ENCODE measurements at regions of chr3 and their contacts with region 1.

Region 1: DNA sequence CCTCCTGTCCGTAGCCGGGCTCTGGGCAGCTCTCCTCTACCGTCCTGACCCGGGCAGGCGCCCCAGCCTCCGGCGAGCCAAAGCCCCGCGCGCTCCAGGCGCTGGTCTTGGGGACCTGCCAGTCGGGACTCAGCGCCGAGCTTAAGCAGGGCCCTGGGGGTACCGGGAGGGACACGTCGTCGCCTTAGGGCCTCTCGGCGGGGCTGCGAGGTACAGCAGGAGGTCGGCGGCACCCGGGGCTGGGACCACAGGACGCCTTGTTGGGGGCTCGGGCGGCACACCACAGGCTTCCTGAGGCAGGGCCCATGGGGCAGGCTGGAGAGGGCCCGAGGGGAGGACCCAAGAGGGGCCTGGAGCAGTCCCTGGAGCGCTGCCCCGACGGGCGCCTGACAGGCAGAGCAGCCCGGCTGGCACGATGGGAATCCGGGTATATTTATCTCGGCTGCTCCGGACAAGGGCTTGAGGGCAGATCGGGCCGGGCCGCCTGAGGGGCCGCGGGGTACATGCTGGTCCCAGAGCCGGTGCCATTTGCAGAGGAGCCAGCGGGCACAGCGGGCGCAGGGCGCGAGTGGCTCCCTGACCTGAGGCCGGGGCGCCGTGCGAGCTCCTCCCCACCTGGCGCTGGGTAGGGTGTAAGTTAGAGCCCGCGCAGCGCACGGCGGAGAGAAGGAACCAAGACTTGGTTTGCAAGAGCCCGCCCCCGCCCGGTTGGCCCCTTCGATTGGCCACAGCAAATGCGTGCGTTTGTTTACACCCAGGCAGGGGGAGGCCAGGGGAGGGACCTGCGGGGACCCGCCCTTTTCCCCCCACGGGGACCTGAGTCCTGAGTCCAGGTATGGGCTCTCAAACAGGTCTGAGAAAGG is 574 bp downstream of the SLC38A3 start:
- DNase-seq: peak; percentile 73
- ATAC-seq: peak; percentile 20
- H3K4me3 ChIP-seq: peak overlapping the region; percentile 79 to 93 (median 85)
- H3K27ac ChIP-seq: peak overlapping the region; percentile 99
- H3K4me1 ChIP-seq: peaks cover 87% of the 10 kb centered on the region
- H3K27me3 ChIP-seq: no peaks in the 10 kb centered on the region
- CTCF ChIP-seq: 0 out of 2 replicates have a peak, but pooled peaks have one; percentile 3
- EP300 ChIP-seq: 0 out of 4 replicates have a peak, but pooled peaks of 1 of the 2 experiments have one; percentile 24
- POLR2A ChIP-seq: peak in 1 of 2 experiments; percentile 62; a peak in 2 of 4 replicates
- RAD21 ChIP-seq: 0 out of 2 replicates have a peak, but pooled peaks have one; percentile 43

Region 2: DNA sequence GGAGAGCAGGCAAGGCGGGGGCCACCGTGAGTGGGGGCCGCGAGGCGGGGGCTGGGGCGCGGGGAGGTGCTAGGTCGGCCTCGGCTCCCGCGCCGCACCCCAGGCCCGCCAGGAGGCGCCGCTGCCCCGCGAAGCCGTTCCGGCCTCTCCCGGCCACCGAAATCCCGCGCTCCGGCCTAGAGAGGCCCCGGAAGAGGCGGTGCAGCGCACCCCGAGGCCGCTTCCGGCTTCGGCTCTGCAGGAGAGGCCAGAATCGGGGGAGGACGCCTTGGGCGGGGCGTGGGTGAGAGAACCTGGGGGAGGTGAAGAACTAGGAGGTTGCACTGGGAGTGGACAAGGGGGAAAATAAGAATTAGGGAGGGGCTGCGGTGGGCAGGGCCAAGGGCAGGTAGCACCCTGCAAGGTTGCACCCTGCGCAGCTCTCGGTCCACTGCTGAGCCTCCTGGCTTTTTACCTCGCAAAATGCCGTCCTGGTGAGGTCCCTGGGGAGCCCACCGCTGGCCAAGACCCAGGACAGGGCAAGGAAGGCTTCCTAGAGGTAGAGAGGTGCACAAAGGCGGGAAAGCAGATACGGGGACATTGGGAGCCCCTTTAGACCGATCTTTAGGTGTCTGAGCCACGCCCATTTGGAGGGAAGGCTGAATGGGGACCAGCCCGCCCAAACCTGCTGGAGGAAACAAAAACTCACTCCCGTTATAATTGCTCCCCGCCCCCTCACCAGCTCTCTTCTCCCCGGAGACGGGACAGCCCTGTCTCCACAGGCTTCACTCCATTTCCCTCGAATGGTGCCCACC is 21.9 kb after region 1 on chr3:
- CTCF ChIA-PET with region 1: interaction called, 5 read pairs
- POLR2A ChIA-PET with region 1: interaction called, 625 read pairs
- in situ Hi-C with region 1: no loop called
- intact Hi-C with region 1: no loop called
- DNase-seq: peak; percentile 82
- ATAC-seq: peak; percentile 78
- H3K4me3 ChIP-seq: peak overlapping the region; percentile 75 to 88 (median 84)
- H3K27ac ChIP-seq: peak overlapping the region; percentile 70
- H3K4me1 ChIP-seq: peaks cover 73% of the 10 kb centered on the region
- H3K27me3 ChIP-seq: no peaks in the 10 kb centered on the region
- CTCF ChIP-seq: peak; percentile 89
- EP300 ChIP-seq: peak; percentile 20 to 47; a peak in 2 of 4 replicates
- POLR2A ChIP-seq: no peak
- RAD21 ChIP-seq: peak; percentile 99

Region 3: GRCh38 chr3:50235716-50236496 is 30.3 kb after region 1 on chr3 and contains the start of gene GNAI2:
- CTCF ChIA-PET with region 1: no interaction called
- POLR2A ChIA-PET with region 1: interaction called, 69 read pairs
- in situ Hi-C with region 1: no loop called
- intact Hi-C with region 1: no loop called
- DNase-seq: peak; percentile 94
- ATAC-seq: peak; percentile 93
- H3K4me3 ChIP-seq: peak within 1 kb of the TSS; percentile 85 to 93 (median 87)
- H3K27ac ChIP-seq: peak within 1 kb of the TSS; percentile 61
- H3K4me1 ChIP-seq: peaks cover 59% of the 10 kb centered on the region
- H3K27me3 ChIP-seq: no peaks in the 10 kb centered on the region; a peak in 1 of 5 replicates
- CTCF ChIP-seq: no peak; the same call in 1 of the 2 replicates
- EP300 ChIP-seq: no peak
- POLR2A ChIP-seq: peak; percentile 66 to 92
- RAD21 ChIP-seq: peak; percentile 51
- total RNA-seq, gene GNAI2: 34.5 and 51.1 TPM in 2 replicates

Region 4: DNA sequence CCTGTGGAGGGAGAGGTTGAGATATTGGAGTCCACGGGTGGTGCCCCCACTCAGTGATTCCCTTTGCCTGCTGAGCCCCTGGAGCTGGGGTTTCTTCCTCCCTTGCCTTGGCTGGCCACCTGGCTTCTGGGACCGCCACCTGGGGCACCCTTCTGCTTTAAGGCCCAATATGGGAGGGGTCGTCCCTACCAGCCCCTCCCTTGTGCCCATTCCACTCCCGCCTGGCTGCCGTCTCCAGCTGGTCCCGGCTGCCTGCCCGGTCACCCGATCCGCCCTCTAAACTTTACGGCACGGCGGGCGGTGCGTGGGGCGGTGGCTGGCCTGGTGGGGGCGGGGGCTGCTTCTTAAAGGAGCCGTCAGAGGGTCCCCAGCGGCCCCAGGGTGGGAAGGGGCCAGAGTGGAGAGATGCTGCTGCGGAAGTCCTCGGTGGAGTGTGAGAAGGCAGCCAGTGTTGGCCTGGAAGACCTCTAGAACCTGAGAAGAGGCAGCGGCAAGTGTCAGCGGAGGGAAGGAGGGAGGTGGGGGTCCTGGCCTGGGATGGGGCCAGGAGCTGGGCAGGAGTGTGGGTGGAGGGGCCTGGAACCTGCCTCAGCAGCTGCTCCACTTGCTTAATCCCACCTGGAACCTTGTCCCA is 61.8 kb after region 1 on chr3:
- CTCF ChIA-PET with region 1: no interaction called
- POLR2A ChIA-PET with region 1: interaction called, 82 read pairs
- in situ Hi-C with region 1: no loop called
- intact Hi-C with region 1: no loop called
- DNase-seq: no peak
- ATAC-seq: no peak
- H3K4me3 ChIP-seq: peak overlapping the region; percentile 9 to 83 (median 44); a peak in 5 of 6 replicates
- H3K27ac ChIP-seq: peak overlapping the region; percentile 88
- H3K4me1 ChIP-seq: peaks cover 88% of the 10 kb centered on the region
- H3K27me3 ChIP-seq: no peaks in the 10 kb centered on the region; a peak in 1 of 5 replicates
- CTCF ChIP-seq: no peak
- EP300 ChIP-seq: no peak
- POLR2A ChIP-seq: no peak
- RAD21 ChIP-seq: no peak

Region 5: GRCh38 chr3:50272911-50273693 is 67.5 kb after region 1 on chr3:
- CTCF ChIA-PET with region 1: no interaction called
- POLR2A ChIA-PET with region 1: interaction called, 22 read pairs
- in situ Hi-C with region 1: no loop called
- intact Hi-C with region 1: no loop called
- DNase-seq: peak; percentile 64
- ATAC-seq: peak; percentile 13
- H3K4me3 ChIP-seq: no peak overlapping the region
- H3K27ac ChIP-seq: peak overlapping the region; percentile 88
- H3K4me1 ChIP-seq: peaks cover 54% of the 10 kb centered on the region
- H3K27me3 ChIP-seq: no peaks in the 10 kb centered on the region; a peak in 1 of 5 replicates
- CTCF ChIP-seq: peak; percentile 99
- EP300 ChIP-seq: 0 out of 4 replicates have a peak, but pooled peaks of 1 of the 2 experiments have one; percentile 26
- POLR2A ChIP-seq: no peak
- RAD21 ChIP-seq: peak; percentile 99

Region 6: GRCh38 chr3:50292159-50293078 is 86.8 kb after region 1 on chr3 and contains the start of gene IFRD2:
- CTCF ChIA-PET with region 1: no interaction called
- POLR2A ChIA-PET with region 1: interaction called, 15 read pairs
- in situ Hi-C with region 1: no loop called
- intact Hi-C with region 1: no loop called
- DNase-seq: peak; percentile 95
- ATAC-seq: peak; percentile 91
- H3K4me3 ChIP-seq: peak within 1 kb of the TSS; percentile 60 to 92 (median 85)
- H3K27ac ChIP-seq: peak within 1 kb of the TSS; percentile 73
- H3K4me1 ChIP-seq: peaks cover 33% of the 10 kb centered on the region
- H3K27me3 ChIP-seq: no peaks in the 10 kb centered on the region
- CTCF ChIP-seq: peak; percentile 53
- EP300 ChIP-seq: peak in 1 of 2 experiments; percentile 44; a peak in 2 of 4 replicates
- POLR2A ChIP-seq: peak in 1 of 2 experiments; percentile 73; a peak in 2 of 4 replicates
- RAD21 ChIP-seq: peak; percentile 31; the same call in 1 of the 2 replicates
- total RNA-seq, gene IFRD2: 81.4 and 96.1 TPM in 2 replicates

Region 7: GRCh38 chr3:50436114-50436674 is 230.5 kb after region 1 on chr3:
- CTCF ChIA-PET with region 1: no interaction called
- POLR2A ChIA-PET with region 1: no interaction called
- in situ Hi-C with region 1: no loop called
- intact Hi-C with region 1: no loop called
- DNase-seq: peak; percentile 50
- ATAC-seq: peak; percentile 92
- H3K4me3 ChIP-seq: no peak overlapping the region
- H3K27ac ChIP-seq: no peak overlapping the region
- H3K4me1 ChIP-seq: no peaks in the 10 kb centered on the region
- H3K27me3 ChIP-seq: peaks cover 1 to 25% of the 10 kb centered on the region in 2 experiments; a peak in 4 of 5 replicates
- CTCF ChIP-seq: peak; percentile 97
- EP300 ChIP-seq: no peak
- POLR2A ChIP-seq: no peak
- RAD21 ChIP-seq: peak; percentile 94

Region 8: DNA sequence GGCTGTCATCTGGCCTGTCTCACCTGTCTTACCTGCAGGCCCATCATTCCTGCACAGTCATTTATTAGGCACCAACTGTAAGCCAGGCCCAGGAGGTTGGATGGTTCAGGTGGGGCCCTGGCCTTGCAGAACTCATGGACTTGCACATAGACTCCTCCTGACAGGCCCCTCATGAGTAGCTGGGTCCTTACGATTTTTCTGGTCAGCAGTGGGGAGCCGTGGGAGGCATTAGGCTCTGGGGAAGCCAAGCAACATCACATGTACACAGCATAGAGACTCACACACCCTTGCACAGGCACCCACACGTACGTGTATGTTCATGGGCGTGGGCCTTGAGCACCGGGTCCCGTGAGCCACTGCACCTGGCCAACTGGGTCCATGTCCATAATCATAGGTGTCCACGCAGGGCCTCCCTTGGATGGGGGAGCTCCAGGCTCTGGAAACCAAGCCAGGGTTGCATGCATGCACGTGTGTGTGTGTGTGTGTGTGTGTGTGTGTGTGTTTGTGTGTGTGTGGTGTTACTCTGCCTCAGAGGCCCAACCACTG is 385.6 kb after region 1 on chr3:
- CTCF ChIA-PET with region 1: no interaction called
- POLR2A ChIA-PET with region 1: no interaction called
- in situ Hi-C with region 1: no loop called
- intact Hi-C with region 1: no loop called
- DNase-seq: no peak
- ATAC-seq: no peak
- H3K4me3 ChIP-seq: no peak overlapping the region
- H3K27ac ChIP-seq: peak overlapping the region; percentile 60
- H3K4me1 ChIP-seq: peaks cover 90% of the 10 kb centered on the region
- H3K27me3 ChIP-seq: no peaks in the 10 kb centered on the region; a peak in 1 of 5 replicates
- CTCF ChIP-seq: no peak
- EP300 ChIP-seq: no peak
- POLR2A ChIP-seq: peak in 1 of 2 experiments; percentile 9; a peak in 1 of 4 replicates
- RAD21 ChIP-seq: no peak